CD4-positive, alpha-beta T cell (primary cell): ENCODE measurements at regions of chr6 and their contacts with region 1.

Region 1: GRCh38 chr6:26514984-26515383 is 14.9 kb downstream of the BTN1A1 start:
- DNase-seq: no peak
- ATAC-seq: no peak
- H3K4me3 ChIP-seq: no peak overlapping the region
- H3K4me3 Mint-ChIP-seq: no peak overlapping the region
- H3K27ac ChIP-seq: no peak overlapping the region
- H3K27ac Mint-ChIP-seq: no peak overlapping the region
- H3K4me1 ChIP-seq: peaks cover under 1% of the 10 kb centered on the region
- H3K4me1 Mint-ChIP-seq: peaks cover 3% of the 10 kb centered on the region
- H3K27me3 ChIP-seq: no peaks in the 10 kb centered on the region
- H3K27me3 Mint-ChIP-seq: no peaks in the 10 kb centered on the region
- CTCF ChIP-seq: no peak

Region 2: DNA sequence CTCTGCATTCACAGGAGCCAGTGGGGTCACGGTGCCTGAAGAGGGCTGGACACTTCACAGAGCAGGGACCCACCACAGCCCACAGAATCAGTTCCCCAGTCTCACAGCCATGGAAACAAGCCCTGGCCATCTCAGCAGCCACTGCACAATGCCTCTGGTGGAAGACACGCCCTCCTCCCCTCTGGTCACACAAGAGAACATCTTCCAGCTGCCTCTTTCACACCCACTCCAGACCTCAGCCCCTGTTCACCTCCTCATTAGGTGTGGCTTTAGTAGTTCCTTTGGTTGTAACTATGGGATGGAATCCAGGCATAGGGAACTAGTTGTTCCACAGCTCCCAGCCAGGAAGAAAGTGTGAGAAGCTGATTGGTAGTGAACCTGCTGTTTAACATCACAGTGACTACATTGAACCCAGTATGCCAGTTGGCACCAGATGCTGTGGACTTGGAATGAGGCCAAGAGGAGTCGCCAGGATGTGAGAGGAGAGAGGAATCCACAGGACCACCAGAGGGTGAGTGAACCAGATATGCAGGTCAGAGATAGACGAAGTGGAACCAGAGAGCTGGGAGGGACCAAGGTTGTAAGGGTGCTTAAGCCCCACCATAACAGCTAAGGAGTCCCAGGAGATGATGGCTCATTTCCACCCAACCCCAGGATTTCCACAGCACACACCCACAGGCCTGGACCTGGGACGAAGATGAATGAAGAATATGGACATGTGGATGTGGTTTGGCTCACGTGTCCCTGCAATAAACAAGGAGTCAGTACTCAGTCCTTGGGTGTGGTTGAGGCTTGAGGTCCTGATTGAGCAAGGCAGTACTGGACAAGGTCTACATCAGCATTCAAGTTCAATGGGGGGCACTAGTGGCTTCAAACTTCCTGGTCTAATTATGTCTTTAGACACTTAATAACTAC is 83.5 kb before region 1 on chr6:
- CTCF ChIA-PET with region 1: no interaction called
- POLR2A ChIA-PET with region 1: no interaction called
- intact Hi-C with region 1: loop called in 1 of 2 experiments (anchors 2 kb)
- DNase-seq: no peak
- ATAC-seq: no peak
- H3K4me3 ChIP-seq: no peak overlapping the region
- H3K4me3 Mint-ChIP-seq: no peak overlapping the region
- H3K27ac ChIP-seq: no peak overlapping the region
- H3K27ac Mint-ChIP-seq: no peak overlapping the region
- H3K4me1 ChIP-seq: no peaks in the 10 kb centered on the region
- H3K4me1 Mint-ChIP-seq: no peaks in the 10 kb centered on the region
- H3K27me3 ChIP-seq: no peaks in the 10 kb centered on the region
- H3K27me3 Mint-ChIP-seq: no peaks in the 10 kb centered on the region
- CTCF ChIP-seq: no peak

Region 3: GRCh38 chr6:26478985-26479278 is 36.1 kb before region 1 on chr6:
- CTCF ChIA-PET with region 1: no interaction called
- POLR2A ChIA-PET with region 1: interaction called, 42 read pairs
- intact Hi-C with region 1: loop called (anchors 1 to 2 kb)
- DNase-seq: peak in 2 of 14 experiments; percentile 25 to 30
- ATAC-seq: no peak
- H3K4me3 ChIP-seq: no peak overlapping the region
- H3K4me3 Mint-ChIP-seq: no peak overlapping the region
- H3K27ac ChIP-seq: no peak overlapping the region
- H3K27ac Mint-ChIP-seq: peak overlapping the region; percentile 99
- H3K4me1 ChIP-seq: peaks cover 36% of the 10 kb centered on the region
- H3K4me1 Mint-ChIP-seq: peaks cover 50% of the 10 kb centered on the region
- H3K27me3 ChIP-seq: no peaks in the 10 kb centered on the region
- H3K27me3 Mint-ChIP-seq: no peaks in the 10 kb centered on the region
- CTCF ChIP-seq: no peak

Region 4: GRCh38 chr6:26604026-26604425 is 89.0 kb after region 1 on chr6:
- CTCF ChIA-PET with region 1: no interaction called
- POLR2A ChIA-PET with region 1: no interaction called
- intact Hi-C with region 1: no loop called
- DNase-seq: no peak
- ATAC-seq: no peak
- H3K4me3 ChIP-seq: no peak overlapping the region
- H3K4me3 Mint-ChIP-seq: no peak overlapping the region
- H3K27ac ChIP-seq: no peak overlapping the region
- H3K27ac Mint-ChIP-seq: no peak overlapping the region
- H3K4me1 ChIP-seq: peaks cover 11% of the 10 kb centered on the region
- H3K4me1 Mint-ChIP-seq: peaks cover 20% of the 10 kb centered on the region
- H3K27me3 ChIP-seq: no peaks in the 10 kb centered on the region
- H3K27me3 Mint-ChIP-seq: no peaks in the 10 kb centered on the region
- CTCF ChIP-seq: no peak